Naive thymus-derived CD4-positive, alpha-beta T cell (primary cell): ENCODE measurements at regions of chr20 and their contacts with region 1.

Region 1: GRCh38 chr20:51531141-51531710 is 11.3 kb downstream of the NFATC2 start:
- DNase-seq: peak in 2 of 9 donors; percentile 47 to 75
- ATAC-seq: peak; percentile 70
- H3K4me3 ChIP-seq: no peak overlapping the region
- H3K4me3 Mint-ChIP-seq: peak overlapping the region in 9 of 10 donors; percentile 17 to 79 (median 57)
- H3K27ac ChIP-seq: peak overlapping the region; percentile 39
- H3K27ac Mint-ChIP-seq: peak overlapping the region; percentile 65 to 91 (median 84)
- H3K4me1 ChIP-seq: peaks cover 65 to 93% of the 10 kb centered on the region in 2 donors
- H3K4me1 Mint-ChIP-seq: peaks cover 75 to 97% (median 94%) of the 10 kb centered on the region in 7 donors
- H3K27me3 ChIP-seq: no peaks in the 10 kb centered on the region
- H3K27me3 Mint-ChIP-seq: no peaks in the 10 kb centered on the region

Region 2: GRCh38 chr20:51480507-51481270 is 50.5 kb before region 1 on chr20:
- CTCF ChIA-PET with region 1: no interaction called
- POLR2A ChIA-PET with region 1: no interaction called
- intact Hi-C with region 1: loop called in 1 of 2 experiments (anchors 2 kb)
- DNase-seq: peak in 2 of 9 donors; percentile 36 to 66
- ATAC-seq: peak; percentile 68
- H3K4me3 ChIP-seq: peak overlapping the region; percentile 8
- H3K4me3 Mint-ChIP-seq: peak overlapping the region; percentile 60 to 86 (median 76)
- H3K27ac ChIP-seq: peak overlapping the region; percentile 63
- H3K27ac Mint-ChIP-seq: peak overlapping the region; percentile 60 to 94 (median 88)
- H3K4me1 ChIP-seq: peaks cover 30 to 33% of the 10 kb centered on the region in 2 donors
- H3K4me1 Mint-ChIP-seq: peaks cover 64 to 90% (median 86%) of the 10 kb centered on the region in 7 donors
- H3K27me3 ChIP-seq: no peaks in the 10 kb centered on the region
- H3K27me3 Mint-ChIP-seq: no peaks in the 10 kb centered on the region

Region 3: DNA sequence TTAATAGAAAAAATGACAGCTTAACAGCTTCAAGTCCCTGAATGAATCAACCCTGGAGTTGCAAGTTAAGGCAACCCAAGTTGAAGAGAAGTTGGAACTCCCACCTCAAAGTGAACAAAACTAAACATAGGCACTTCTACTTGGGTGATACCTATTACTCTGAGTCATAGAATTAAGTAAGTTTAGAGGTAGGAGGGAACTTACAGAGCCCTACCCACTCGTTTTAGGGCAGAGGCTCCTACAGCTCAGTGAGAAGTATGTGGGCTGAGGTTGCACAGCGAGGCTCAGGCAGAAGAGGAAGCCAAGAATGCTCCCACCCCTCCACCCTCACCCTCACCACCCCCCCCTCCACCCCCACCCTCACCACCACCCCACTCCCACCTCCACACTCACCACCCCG is 30.9 kb before region 1 on chr20:
- CTCF ChIA-PET with region 1: no interaction called
- POLR2A ChIA-PET with region 1: interaction called, 5 read pairs
- intact Hi-C with region 1: loop called in 1 of 2 experiments (anchors 1 kb)
- DNase-seq: peak in 8 of 9 donors; percentile 38 to 74 (median 54)
- ATAC-seq: peak; percentile 89
- H3K4me3 ChIP-seq: no peak overlapping the region
- H3K4me3 Mint-ChIP-seq: peak overlapping the region; percentile 21 to 99 (median 54)
- H3K27ac ChIP-seq: peak overlapping the region; percentile 58
- H3K27ac Mint-ChIP-seq: peak overlapping the region; percentile 65 to 100 (median 95)
- H3K4me1 ChIP-seq: peaks cover 59 to 60% of the 10 kb centered on the region in 2 donors
- H3K4me1 Mint-ChIP-seq: peaks cover 63 to 93% (median 87%) of the 10 kb centered on the region in 7 donors
- H3K27me3 ChIP-seq: no peaks in the 10 kb centered on the region
- H3K27me3 Mint-ChIP-seq: no peaks in the 10 kb centered on the region

Region 4: DNA sequence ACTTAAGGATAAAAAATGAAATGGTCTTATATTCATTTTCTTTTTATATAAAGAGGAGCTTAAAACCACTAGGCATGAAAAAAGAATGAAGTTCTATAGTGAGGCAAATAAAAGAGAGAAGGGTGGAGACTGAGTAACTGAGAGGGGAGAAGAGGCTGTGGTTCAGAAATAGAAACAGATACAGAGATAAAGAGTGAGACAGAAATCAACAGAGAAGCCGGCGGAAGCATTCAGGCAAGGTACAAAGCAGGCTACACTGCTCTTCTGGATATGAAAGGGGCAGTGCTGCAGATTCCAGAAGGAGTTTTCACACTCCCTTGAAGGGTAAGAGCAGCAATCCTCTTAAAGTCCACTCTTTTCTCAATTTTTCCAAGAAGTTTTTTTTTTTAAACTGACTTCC is 18.6 kb before region 1 on chr20:
- CTCF ChIA-PET with region 1: interaction called, 3 read pairs
- POLR2A ChIA-PET with region 1: interaction called, 3 read pairs
- intact Hi-C with region 1: loop called (anchors 1 to 2 kb)
- DNase-seq: peak in 6 of 9 donors; percentile 34 to 61 (median 44)
- ATAC-seq: peak; percentile 80
- H3K4me3 ChIP-seq: peak overlapping the region; percentile 9
- H3K4me3 Mint-ChIP-seq: peak overlapping the region; percentile 47 to 81 (median 62)
- H3K27ac ChIP-seq: peak overlapping the region; percentile 61
- H3K27ac Mint-ChIP-seq: peak overlapping the region; percentile 82 to 94 (median 91)
- H3K4me1 ChIP-seq: peaks cover 60 to 61% of the 10 kb centered on the region in 2 donors
- H3K4me1 Mint-ChIP-seq: peaks cover 57 to 97% (median 89%) of the 10 kb centered on the region in 7 donors
- H3K27me3 ChIP-seq: no peaks in the 10 kb centered on the region
- H3K27me3 Mint-ChIP-seq: no peaks in the 10 kb centered on the region

Region 5: DNA sequence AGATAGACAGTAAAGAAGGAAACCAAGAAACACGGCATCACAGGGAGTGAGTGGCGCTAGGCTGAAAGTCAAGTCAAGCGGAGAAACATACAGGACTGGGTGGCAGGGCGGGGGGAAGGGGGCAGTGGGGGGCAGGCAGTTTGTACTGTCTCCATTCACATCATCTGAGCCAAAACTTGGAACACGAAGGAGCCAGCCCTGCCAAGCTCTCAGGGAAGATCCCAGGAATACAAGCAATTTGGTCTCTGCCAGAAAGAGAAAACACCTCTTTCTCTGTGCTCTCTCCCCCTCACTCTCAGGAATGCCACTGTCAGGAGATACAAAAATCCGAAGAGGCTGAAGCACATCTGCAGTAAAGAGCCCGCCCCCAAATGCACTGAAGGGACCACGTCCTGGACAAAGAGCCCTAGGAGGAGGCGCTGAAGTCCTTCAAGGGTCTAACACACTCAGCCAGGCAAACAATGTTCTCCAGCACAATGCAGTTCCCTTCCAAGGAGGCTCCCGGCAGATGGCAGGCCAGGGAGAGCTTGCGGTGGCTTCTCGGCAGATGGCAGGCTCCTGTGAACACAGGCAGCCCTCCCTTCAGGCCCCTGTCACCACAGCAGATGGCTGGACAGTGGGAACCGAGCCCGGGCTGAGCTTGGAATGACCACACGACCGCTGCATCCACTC is 146.9 kb after region 1 on chr20:
- CTCF ChIA-PET with region 1: no interaction called
- POLR2A ChIA-PET with region 1: no interaction called
- intact Hi-C with region 1: no loop called
- DNase-seq: no peak
- ATAC-seq: no peak
- H3K4me3 ChIP-seq: no peak overlapping the region
- H3K4me3 Mint-ChIP-seq: no peak overlapping the region
- H3K27ac ChIP-seq: no peak overlapping the region
- H3K27ac Mint-ChIP-seq: no peak overlapping the region
- H3K4me1 ChIP-seq: no peaks in the 10 kb centered on the region
- H3K4me1 Mint-ChIP-seq: peaks cover 0 to 2% (median 0%) of the 10 kb centered on the region in 7 donors
- H3K27me3 ChIP-seq: no peaks in the 10 kb centered on the region
- H3K27me3 Mint-ChIP-seq: peaks cover 0 to 9% (median 6%) of the 10 kb centered on the region in 5 donors